Activated T-helper 2 cell treated with anti-CD3 and anti-CD28 coated beads, Interferon-gamma antibody, Interleukin-2, Interleukin-4, amounts not matched to agents 10 μg/mL and 5 μg/mL and 100 μg/mL, durations not matched to agents 14 hours and 24 hours and 36 hours (primary cell): ENCODE measurements at regions of chr10 and their contacts with region 1.

Region 1: DNA sequence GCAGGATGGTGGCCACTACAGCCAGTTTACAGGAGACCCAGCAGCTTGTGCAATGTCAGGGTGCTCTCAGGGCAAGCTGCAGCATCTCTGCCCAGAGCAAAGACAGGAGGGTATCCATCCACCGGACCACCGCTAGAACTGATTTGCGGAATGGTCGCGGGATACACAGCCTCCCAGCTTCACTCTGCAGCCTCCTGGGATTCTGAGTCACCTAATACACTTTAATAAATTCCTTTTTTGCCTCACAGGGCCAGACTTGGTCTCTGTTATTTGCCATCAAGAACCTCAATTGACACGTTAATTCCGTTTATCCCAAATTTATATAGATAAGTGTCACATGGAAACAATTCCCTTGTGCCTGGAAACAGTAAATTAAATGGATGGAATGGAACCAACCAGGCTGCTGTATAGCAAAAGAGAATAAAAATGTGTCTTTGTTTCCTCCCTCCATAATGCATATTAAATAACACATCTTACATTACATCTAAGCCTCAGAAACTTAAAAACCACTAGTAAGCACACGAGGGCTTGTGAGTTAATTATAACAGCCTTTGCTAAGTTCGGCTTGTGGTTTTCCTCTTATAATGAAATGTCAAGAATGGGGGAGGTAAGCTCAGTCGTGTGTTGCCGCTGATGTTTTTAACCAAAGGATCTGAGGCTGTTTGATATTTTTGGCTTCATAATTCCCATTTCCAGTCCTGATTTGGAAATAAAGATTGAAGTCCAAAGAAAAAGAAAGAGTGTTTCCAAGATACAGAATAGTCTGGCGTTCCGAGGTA is 52.1 kb downstream of the ADRB1 start:
- DNase-seq: no peak
- H3K4me3 Mint-ChIP-seq: no peak overlapping the region
- H3K27ac Mint-ChIP-seq: no peak overlapping the region
- H3K4me1 Mint-ChIP-seq: peaks cover 38% of the 10 kb centered on the region
- H3K27me3 Mint-ChIP-seq: peaks cover 54% of the 10 kb centered on the region

Region 2: GRCh38 chr10:114083040-114083439 is 12.7 kb before region 1 on chr10:
- intact Hi-C with region 1: loop called (anchors 1 kb)
- DNase-seq: no peak
- H3K4me3 Mint-ChIP-seq: no peak overlapping the region
- H3K27ac Mint-ChIP-seq: no peak overlapping the region
- H3K4me1 Mint-ChIP-seq: peaks cover 1% of the 10 kb centered on the region
- H3K27me3 Mint-ChIP-seq: peaks cover 40% of the 10 kb centered on the region

Region 3: DNA sequence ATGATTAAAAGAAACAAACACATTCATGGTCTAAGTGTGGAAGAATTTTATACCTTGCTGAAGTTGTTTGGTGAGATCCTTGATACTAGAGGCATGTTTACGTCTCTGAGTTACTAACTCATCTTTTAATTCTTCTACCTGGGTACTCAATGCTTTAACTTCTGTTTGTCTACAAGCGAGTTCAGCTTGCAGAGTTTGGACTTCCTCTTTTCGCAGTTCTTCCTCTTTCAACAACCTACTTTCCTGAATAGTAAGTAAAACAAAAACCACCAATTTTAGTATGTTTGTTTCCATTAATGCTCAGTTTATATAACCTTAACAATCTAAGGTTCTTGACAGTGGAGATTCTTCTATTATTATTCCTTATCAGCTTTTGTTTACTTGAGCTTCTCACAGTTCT is 35.3 kb after region 1 on chr10:
- intact Hi-C with region 1: no loop called
- DNase-seq: no peak
- H3K4me3 Mint-ChIP-seq: no peak overlapping the region
- H3K27ac Mint-ChIP-seq: no peak overlapping the region
- H3K4me1 Mint-ChIP-seq: peaks cover 2% of the 10 kb centered on the region
- H3K27me3 Mint-ChIP-seq: no peaks in the 10 kb centered on the region